HCT116 (cell line): ENCODE measurements at regions of chr2 and their contacts with region 1.

Region 1: GRCh38 chr2:53715568-53715967 is 52.0 kb upstream of the CHAC2 start:
- DNase-seq: peak; percentile 12
- ATAC-seq: no peak
- H3K4me3 ChIP-seq: no peak overlapping the region
- H3K27ac ChIP-seq: no peak overlapping the region
- H3K4me1 ChIP-seq: no peaks in the 10 kb centered on the region
- H3K27me3 ChIP-seq: no peaks in the 10 kb centered on the region
- CTCF ChIP-seq: peak; percentile 33 to 47 (median 37); a peak in 4 of 6 replicates
- POLR2A ChIP-seq: no peak
- RAD21 ChIP-seq: peak; percentile 68

Region 2: DNA sequence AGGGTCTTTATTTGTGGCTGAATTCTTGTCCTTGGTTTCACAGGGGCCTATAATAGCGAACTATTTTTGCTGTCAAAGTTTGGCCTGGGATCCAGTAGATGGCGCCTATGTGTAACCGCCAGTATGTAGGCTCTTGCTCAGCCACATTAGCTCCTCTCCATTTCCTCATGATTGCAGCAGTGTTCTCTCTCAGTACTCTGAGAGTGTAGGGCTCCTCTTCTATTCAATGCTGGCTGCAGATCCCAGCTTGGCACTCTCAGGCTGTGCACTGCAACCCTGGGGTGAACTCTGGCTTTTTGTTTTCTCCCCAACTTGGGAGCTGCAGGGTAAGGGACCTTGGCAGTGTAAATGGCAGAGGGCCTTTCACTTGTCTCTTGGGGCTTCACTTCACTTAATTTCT is 292.6 kb before region 1 on chr2:
- CTCF ChIA-PET with region 1: interaction called, 5 read pairs
- POLR2A ChIA-PET with region 1: no interaction called
- RAD21 ChIA-PET with region 1: no interaction called
- intact Hi-C with region 1: loop called (anchors 10 kb)
- DNase-seq: peak; percentile 44
- ATAC-seq: peak; percentile 98
- H3K4me3 ChIP-seq: no peak overlapping the region
- H3K27ac ChIP-seq: no peak overlapping the region
- H3K4me1 ChIP-seq: peaks cover 0 to 4% of the 10 kb centered on the region in 2 experiments; a peak in 1 of 4 replicates
- H3K27me3 ChIP-seq: no peaks in the 10 kb centered on the region
- CTCF ChIP-seq: peak; percentile 71 to 76 (median 73)
- POLR2A ChIP-seq: no peak
- RAD21 ChIP-seq: peak; percentile 86

Region 3: DNA sequence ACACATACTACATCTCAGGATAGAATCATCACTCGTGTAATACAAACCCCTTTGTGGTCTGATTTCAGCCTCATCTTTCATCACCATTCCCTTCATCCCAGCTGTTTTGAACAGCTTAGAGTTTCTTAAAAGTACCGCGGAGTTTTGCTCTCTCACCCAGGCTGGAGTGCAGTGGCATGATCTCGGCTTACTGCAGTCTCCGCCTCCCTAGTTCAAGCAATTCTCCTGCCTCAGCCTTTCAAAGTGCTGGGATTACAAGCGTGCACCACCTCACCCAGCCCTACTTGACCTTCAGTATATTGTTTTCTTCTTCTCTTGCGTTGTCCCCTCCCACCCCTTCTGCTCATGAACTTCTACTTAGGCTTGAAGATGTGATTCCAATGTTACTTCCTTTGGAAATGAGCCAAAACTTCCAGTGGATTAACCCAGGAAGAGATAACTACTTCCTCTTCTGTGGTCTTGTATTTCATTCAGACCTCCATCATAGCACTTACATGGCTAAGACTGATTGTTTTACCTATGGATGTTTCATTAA is 87.1 kb after region 1 on chr2:
- CTCF ChIA-PET with region 1: no interaction called
- POLR2A ChIA-PET with region 1: no interaction called
- RAD21 ChIA-PET with region 1: no interaction called
- intact Hi-C with region 1: no loop called
- DNase-seq: no peak
- ATAC-seq: no peak
- H3K4me3 ChIP-seq: no peak overlapping the region
- H3K27ac ChIP-seq: no peak overlapping the region
- H3K4me1 ChIP-seq: no peaks in the 10 kb centered on the region
- H3K27me3 ChIP-seq: no peaks in the 10 kb centered on the region
- CTCF ChIP-seq: no peak
- POLR2A ChIP-seq: no peak
- RAD21 ChIP-seq: no peak